GM12878 (cell line): ENCODE measurements at regions of chr13 and their contacts with region 1.

Region 1: GRCh38 chr13:102812611-102813287 is 13.8 kb downstream of the BIVM start:
- DNase-seq: no peak
- ATAC-seq: peak; percentile 79
- H3K4me3 ChIP-seq: no peak overlapping the region
- H3K27ac ChIP-seq: peak overlapping the region; percentile 46; the same call in 1 of the 2 replicates
- H3K4me1 ChIP-seq: peaks cover 15% of the 10 kb centered on the region
- H3K27me3 ChIP-seq: no peaks in the 10 kb centered on the region
- CTCF ChIP-seq: no peak
- EP300 ChIP-seq: no peak
- POLR2A ChIP-seq: no peak
- RAD21 ChIP-seq: no peak

Region 2: DNA sequence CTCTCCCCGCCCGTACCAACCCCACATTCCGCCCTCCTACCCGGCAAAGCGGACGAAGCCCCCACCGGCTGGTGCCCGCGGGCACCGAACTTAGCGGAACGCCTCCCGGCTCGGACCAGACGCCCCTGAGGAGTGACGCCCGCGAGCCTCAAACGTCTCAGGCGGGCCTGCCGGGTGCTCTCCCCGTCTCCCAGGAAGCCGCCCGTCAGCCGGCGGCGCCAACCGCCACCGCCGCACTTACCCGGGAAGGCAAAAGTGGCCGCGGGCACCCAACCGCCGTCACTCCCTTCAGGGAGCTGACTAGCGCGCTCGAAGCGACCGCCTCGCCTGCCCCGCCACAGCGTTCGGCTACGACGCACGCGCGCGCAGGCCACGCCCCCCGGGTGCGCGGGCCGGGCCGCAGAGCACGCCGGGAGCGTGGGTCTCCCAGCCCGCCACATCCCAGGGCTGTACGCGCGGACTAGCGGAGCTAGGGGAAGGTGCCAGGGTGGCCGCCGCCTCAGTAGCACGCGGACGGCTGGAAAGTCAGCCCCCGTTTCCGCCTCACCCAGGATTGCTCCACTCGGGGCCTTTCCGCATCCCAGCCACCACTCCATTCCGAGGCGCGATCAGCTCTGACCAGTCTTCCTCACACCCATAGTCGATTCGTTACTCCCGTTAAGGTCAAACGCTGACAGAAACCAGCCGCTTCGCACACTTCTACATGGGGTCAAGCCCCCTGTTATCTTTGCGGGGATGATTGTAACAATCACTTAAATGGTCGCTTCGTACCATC is 39.1 kb before region 1 on chr13 and contains the start of gene TEX30:
- CTCF ChIA-PET with region 1: interaction called, 3 read pairs
- POLR2A ChIA-PET with region 1: no interaction called
- RAD21 ChIA-PET with region 1: interaction called, 3 read pairs
- SMC1A ChIA-PET with region 1: interaction called, 5 read pairs
- in situ Hi-C with region 1: no loop called
- intact Hi-C with region 1: loop called (anchors 5 kb)
- DNase-seq: peak; percentile 38
- ATAC-seq: peak; percentile 95
- H3K4me3 ChIP-seq: peak within 1 kb of the TSS; percentile 89
- H3K27ac ChIP-seq: peak within 1 kb of the TSS; percentile 73
- H3K4me1 ChIP-seq: peaks cover 11% of the 10 kb centered on the region
- H3K27me3 ChIP-seq: no peaks in the 10 kb centered on the region
- CTCF ChIP-seq: no peak
- EP300 ChIP-seq: no peak
- POLR2A ChIP-seq: peak; percentile 99
- RAD21 ChIP-seq: no peak
- polyA plus RNA-seq, gene TEX30: 79.5 to 114 TPM